ENCODE measurements at regions of chr19 and their contacts with region 1.

Region 1: DNA sequence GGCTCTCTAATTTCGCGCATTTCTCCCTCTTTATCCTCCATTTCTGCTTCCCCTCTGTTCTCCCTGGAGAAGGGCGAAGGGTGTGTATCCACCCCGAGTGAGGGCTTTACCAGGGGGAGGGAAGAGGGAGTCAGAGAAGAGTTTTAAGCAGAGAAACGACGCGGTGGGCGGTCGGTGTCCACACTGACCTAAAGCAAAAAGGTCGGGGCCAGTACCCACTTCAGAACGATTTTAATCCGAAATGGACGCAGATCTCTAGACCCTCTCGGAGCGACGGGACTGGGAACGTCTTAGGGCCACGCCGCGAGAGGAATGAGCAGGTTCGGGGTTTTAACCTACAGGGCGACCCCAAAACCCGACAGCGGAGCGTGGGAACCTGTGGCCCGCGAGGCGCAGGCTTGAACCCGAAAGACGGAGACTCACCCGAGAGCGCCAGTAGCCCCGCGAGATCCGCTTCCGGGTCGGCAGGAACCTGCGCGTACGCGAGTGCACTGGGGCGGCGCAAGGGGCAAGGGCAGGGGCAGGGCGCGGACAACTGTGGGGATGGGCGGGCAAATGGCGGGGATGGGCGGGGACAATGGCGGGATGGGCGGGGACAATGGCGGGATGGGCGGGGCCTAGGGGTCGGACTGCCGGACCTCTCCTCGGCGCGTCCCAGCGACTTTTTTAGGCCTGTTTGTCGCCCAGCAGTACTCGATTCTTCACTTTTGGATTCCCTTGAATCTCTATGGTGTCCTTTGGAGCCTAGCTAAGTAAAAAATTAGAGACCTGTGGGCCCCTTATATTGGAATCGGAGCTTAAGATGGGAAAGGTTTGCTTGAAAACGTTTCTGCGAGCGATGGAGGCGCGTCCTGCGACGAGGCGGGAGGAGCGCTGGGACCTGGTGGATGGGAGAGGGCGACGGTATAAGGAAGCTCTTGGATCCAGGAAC is at the start of gene ZNF677:
- DNase-seq: peak; percentile 82
- H3K4me3 ChIP-seq: peak within 1 kb of the TSS; percentile 79 to 98 (median 90)
- H3K27ac ChIP-seq: peak within 1 kb of the TSS; percentile 42
- H3K4me1 ChIP-seq: peaks cover 7% of the 10 kb centered on the region
- H3K27me3 ChIP-seq: no peaks in the 10 kb centered on the region
- CTCF ChIP-seq: no peak
- POLR2A ChIP-seq: peak; percentile 73
- total RNA-seq, gene ZNF677: 15.8 and 21.0 TPM in 2 replicates

Region 2: GRCh38 chr19:53333463-53334449 is 79.1 kb after region 1 on chr19 and contains the start of gene ZNF845:
- CTCF ChIA-PET with region 1: no interaction called
- POLR2A ChIA-PET with region 1: no interaction called
- dilution Hi-C with region 1: no loop called
- intact Hi-C with region 1: loop called (anchors 1 kb)
- DNase-seq: peak; percentile 95
- H3K4me3 ChIP-seq: peak within 1 kb of the TSS; percentile 55 to 99 (median 98)
- H3K27ac ChIP-seq: peak within 1 kb of the TSS; percentile 84
- H3K4me1 ChIP-seq: peaks cover 2% of the 10 kb centered on the region
- H3K27me3 ChIP-seq: no peaks in the 10 kb centered on the region
- CTCF ChIP-seq: no peak
- POLR2A ChIP-seq: peak; percentile 62
- total RNA-seq, gene ZNF845: 4.6 and 5.0 TPM in 2 replicates

Region 3: DNA sequence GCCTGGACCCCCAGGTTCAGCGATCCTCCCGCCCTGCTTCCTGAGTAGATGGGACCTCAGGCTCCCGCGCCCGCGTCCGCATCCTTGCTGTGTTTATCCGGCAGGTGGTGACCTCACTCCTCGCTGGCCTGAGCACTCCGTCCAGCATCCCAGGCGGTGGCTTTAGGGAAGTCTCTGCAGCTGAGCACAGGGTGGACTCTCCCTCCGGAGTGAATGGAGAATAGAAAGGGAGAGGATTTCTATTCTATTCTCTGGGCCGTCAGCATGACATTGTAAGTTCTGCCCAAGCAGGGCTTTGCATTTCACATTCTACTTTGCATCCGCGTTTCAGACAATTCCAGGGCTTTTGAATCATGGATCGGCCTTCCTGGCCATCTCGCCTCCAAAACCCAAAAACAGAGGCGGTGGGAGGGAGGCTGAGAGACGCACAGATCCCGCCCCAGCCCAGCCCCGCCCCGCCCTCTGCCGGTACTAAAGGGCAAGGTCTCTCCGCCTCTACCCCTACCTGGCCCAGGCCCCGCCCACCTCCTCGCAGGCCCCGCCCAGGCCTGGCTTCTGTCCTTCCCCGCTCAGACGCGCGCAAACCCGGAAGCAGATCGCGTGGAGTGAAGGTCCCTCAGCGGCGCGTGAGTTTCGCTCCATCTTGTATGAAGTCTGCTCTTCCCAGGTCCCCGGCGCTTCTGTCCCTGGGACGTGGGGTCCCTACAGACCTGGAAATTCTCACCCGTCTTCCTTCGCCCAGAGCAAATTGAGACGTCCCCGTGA is 110.6 kb after region 1 on chr19 and contains the start of gene ZNF525:
- CTCF ChIA-PET with region 1: no interaction called
- POLR2A ChIA-PET with region 1: no interaction called
- dilution Hi-C with region 1: no loop called
- intact Hi-C with region 1: loop called (anchors 10 kb)
- DNase-seq: peak; percentile 67
- H3K4me3 ChIP-seq: peak within 1 kb of the TSS; percentile 53 to 88 (median 56)
- H3K27ac ChIP-seq: no peak within 1 kb of the TSS
- H3K4me1 ChIP-seq: peaks cover 2% of the 10 kb centered on the region
- H3K27me3 ChIP-seq: no peaks in the 10 kb centered on the region
- CTCF ChIP-seq: peak in 1 of 2 donors; percentile 16
- POLR2A ChIP-seq: peak; percentile 43
- total RNA-seq, gene ZNF525: 3.7 and 3.8 TPM in 2 replicates

Measured in endothelial cell of umbilical vein (primary cell).